AG04450 (cell line): ENCODE measurements at regions of chr7 and their contacts with region 1.

Region 1: GRCh38 chr7:150876817-150877526 is 24.7 kb downstream of the AOC1 start:
- DNase-seq: peak; percentile 32
- H3K4me3 ChIP-seq: no peak overlapping the region
- H3K27ac ChIP-seq: no peak overlapping the region
- H3K27me3 ChIP-seq: no peaks in the 10 kb centered on the region
- CTCF ChIP-seq: peak; percentile 48

Region 2: DNA sequence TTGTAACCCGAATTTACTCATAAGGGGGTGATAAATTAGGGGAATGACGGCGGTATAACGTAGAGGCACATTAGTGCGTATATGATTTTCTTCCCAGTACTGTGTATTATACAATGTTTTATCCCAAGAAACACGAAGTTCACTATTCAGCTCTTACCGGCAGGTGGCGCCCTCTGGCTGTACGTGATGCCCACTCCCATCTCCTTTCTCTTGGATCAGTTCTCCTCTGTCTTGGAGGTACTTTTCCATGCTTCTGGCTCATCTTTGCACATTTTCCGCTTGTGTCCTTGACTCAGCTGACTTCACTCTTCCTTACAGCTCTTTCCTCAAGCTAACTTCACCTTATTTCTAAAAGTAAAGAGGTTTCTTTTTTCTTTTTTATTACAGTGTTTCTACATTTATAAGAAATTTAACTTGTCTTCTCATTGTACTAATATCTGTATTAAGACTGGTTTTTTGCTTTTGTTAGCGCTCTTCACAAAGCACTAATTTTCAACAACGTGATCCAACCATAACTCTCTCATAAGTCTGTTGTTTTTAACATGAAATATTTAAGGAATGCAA is 98.2 kb before region 1 on chr7:
- CTCF ChIA-PET with region 1: interaction called, 28 read pairs
- POLR2A ChIA-PET with region 1: no interaction called
- DNase-seq: peak; percentile 43
- H3K4me3 ChIP-seq: no peak overlapping the region
- H3K27ac ChIP-seq: no peak overlapping the region
- H3K27me3 ChIP-seq: no peaks in the 10 kb centered on the region
- CTCF ChIP-seq: peak; percentile 90

Region 3: DNA sequence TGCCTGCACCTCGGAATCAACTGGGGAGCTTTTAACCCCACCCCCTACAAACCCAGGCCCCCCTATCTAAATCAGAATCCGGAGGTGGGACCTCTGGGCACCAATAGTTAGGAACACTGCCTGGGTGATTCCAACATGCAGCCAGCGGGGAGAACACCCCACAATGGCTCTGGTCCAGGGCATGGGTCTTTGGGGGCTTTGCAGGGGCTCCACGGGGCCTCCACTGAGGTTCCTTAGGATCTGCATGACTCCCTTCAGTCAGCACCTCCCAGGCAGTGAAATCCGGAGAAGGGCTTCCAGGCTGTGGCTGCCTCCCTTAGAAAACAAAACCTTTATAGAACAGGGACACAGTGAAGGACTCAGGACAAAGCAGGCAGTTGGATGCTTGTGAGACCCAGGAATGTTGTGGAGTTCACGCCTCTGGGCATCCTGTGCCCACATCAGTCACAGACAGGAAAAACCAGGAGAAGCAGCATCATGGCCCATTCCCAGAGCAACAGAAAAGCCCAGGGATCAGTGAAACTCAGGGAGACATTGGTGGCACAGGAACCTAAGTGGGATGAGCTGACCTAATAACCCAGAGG is 41.2 kb before region 1 on chr7:
- CTCF ChIA-PET with region 1: interaction called, 10 read pairs
- POLR2A ChIA-PET with region 1: no interaction called
- DNase-seq: no peak
- H3K4me3 ChIP-seq: no peak overlapping the region
- H3K27ac ChIP-seq: no peak overlapping the region
- H3K27me3 ChIP-seq: no peaks in the 10 kb centered on the region
- CTCF ChIP-seq: no peak

Region 4: DNA sequence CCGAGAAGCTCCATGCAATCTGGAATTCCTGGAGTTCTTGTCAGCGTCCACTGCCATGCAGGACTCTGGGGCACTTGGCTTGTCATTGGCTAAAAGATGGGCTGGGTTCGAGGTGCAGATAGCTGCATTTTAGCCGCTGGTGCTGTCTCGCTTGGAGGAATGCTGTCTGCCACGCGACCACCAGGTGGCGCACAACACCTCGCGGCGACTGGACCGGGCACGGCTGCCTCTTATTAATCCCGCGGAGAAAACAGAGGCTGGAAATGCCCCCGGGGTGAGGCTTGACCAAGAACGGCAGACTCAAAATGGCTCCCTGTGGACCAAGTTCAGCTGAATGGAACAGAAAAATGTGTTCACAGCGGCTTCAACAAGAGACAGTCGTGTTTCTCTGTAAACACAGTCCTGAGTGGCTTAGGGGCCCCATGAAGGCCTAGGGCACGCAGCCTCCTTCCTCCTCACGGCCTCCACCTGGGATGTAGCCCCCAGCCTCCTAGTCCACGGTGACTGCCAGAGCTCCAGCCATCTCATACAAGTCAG is 21.6 kb after region 1 on chr7:
- CTCF ChIA-PET with region 1: interaction called, 21 read pairs
- POLR2A ChIA-PET with region 1: no interaction called
- DNase-seq: peak; percentile 29
- H3K4me3 ChIP-seq: no peak overlapping the region
- H3K27ac ChIP-seq: no peak overlapping the region
- H3K27me3 ChIP-seq: peaks cover 14% of the 10 kb centered on the region
- CTCF ChIP-seq: peak; percentile 90

Region 5: DNA sequence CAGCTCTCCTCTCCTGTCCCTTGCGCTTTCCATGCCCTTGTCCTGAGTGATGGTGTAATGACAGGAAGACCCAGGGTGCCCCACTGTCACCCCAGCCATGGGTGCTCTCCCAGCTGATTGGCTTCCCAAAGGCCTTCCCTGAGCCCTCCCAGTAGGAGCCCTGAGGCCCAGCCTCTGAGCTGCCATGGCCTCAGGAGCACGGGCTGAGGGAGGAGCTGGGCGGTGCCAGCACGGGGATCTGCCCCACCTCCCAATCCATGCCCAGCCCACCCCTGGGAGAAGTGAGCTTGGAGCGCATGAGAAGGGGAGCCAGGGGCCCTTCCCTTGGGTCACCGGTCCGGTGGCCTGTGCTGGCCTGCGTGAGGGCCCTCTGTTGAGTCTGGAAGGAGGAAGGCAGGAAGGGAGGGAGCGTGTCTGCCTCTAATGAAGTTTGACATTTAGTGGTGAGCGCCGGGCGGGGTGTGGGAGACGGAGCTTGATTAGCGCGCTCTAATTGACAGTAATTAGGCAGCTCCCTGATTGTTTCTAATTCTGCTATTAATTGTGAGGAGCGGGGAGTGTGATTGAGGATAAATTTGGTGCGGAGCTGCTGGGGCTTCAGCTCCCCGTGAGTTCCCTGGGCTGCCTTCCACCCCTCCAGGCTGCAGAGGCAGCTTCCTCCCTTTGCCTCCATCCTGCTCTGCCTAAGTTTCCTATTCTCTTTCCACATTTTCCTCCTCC is 262.3 kb after region 1 on chr7:
- CTCF ChIA-PET with region 1: no interaction called
- POLR2A ChIA-PET with region 1: no interaction called
- DNase-seq: no peak
- H3K4me3 ChIP-seq: no peak overlapping the region
- H3K27ac ChIP-seq: no peak overlapping the region
- H3K27me3 ChIP-seq: no peaks in the 10 kb centered on the region
- CTCF ChIP-seq: no peak